Sigmoid colon (tissue), 7 donors: ENCODE measurements at regions of chr1 and their contacts with region 1.

Region 1: DNA sequence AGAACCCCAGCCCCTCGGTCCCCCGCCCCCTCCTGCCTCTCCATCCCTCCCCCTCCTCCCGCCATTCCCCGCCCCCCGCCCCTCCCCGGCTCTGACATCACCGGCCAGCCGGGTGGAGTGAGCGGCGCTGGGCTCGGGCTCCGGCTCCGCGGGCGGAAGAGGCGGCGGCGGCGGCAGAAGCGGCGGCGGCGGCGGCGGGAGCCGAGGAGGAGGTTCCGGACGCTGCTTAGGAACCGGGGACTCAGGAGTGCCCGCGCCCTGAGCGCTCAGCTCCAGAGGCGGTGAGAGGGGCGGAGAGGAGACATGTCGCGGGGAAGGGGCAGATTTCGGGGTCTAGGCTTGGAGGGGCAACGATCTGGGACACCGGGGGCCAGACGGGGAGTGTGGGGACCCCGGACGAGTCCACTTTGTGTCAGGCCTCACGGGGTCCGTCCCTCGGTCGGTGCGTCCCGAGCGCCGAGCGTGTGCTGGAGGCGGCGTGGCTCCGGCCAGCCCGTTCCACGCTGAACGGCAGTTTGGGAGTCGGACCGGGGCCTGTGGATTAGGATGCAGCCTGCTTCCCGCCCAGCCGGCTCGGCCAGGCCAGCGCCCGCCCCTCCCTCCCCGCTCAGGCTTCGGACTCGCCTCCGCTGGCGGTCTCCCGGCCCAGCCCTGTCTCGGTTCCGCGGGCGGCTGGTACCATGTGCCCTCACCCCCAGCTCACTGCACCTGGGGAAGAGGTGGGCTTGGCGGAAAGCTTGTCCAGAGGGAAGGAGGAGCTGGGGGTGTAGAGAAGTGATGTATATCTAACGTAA is at the start of gene PEA15:
- DNase-seq: peak; percentile 88
- H3K4me3 ChIP-seq: peak within 1 kb of the TSS; percentile 80 to 95 (median 90)
- H3K27ac ChIP-seq: peak within 1 kb of the TSS; percentile 93 to 99 (median 96)
- H3K4me1 ChIP-seq: peaks cover 0 to 58% (median 52%) of the 10 kb centered on the region in 4 donors
- H3K27me3 ChIP-seq: no peaks in the 10 kb centered on the region
- CTCF ChIP-seq: no peak
- EP300 ChIP-seq: no peak
- POLR2A ChIP-seq: peak in 1 of 2 donors; percentile 57
- total RNA-seq, gene PEA15: 65.7 to 126 (median 88.8) TPM

Region 2: DNA sequence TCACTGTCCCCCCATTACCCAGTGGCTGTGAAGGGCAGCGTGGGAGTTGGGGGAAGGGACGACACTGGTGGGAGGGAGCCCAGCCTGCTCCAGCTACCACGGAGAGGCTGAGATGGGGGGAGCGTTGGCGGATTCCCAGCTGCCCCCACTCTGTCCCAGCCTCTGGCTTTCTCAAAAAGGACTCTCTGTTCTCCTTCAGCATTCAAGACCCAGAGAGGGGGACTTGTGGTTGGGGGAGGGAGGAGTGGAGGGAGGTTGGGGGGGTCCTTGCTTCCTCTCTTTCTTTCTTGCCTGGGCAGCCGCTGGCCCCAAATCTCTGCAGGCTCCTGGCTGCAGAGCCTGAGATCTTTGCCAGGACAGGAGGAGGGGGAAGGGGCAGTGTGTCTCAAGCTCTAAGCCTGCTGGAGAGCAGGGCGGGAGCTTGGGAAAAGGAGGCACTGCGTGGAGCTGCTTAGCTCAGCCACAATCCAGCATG is 87.7 kb before region 1 on chr1:
- intact Hi-C with region 1: loop called (anchors 5 kb)
- DNase-seq: peak; percentile 89
- H3K4me3 ChIP-seq: peak overlapping the region; percentile 33 to 59 (median 54)
- H3K27ac ChIP-seq: peak overlapping the region; percentile 84 to 89 (median 86)
- H3K4me1 ChIP-seq: peaks cover 0 to 64% (median 47%) of the 10 kb centered on the region in 4 donors
- H3K27me3 ChIP-seq: no peaks in the 10 kb centered on the region
- CTCF ChIP-seq: no peak
- EP300 ChIP-seq: no peak
- POLR2A ChIP-seq: no peak

Region 3: DNA sequence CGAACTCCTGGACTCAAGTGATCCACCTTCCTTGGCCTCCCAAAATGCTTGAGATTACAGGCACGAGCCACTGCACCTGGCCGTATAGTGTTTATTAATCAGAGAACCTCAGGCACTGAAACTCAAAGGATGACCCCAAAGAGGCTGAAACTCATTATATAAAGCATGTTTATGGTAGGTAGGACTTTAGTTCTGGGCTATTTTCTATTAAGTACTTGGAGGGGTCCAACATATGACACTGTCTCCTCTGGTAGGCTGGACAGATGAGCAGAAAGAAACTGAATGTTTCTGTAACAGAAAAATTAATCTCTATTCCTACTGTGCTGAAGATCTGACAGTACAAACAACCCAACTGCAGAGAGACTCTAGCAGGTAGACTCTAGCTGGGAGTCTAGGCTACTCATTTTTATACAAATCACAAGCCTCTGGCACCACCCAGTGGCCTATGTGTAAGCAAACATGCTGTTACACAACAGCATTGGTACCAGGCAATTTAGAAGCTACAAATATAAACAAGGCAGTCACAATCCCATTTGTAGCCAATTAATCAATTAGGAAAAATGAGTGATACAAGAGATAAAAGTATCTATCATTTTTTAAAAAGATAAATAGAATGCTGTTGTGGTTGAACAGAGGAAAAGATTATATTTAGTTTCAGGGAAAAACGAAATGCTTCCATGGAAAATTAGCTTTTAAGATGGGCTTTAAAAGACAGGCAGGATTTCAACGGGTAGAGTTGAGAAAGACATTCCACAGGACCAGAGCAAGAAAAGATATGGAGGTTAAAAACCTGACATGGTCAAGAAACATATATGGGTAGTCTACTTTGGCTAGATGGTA is 46.5 kb after region 1 on chr1:
- intact Hi-C with region 1: loop called (anchors 5 kb)
- DNase-seq: peak; percentile 88
- H3K4me3 ChIP-seq: no peak overlapping the region
- H3K27ac ChIP-seq: peak overlapping the region; percentile 33 to 61 (median 47)
- H3K4me1 ChIP-seq: peaks cover 0 to 44% (median 34%) of the 10 kb centered on the region in 4 donors
- H3K27me3 ChIP-seq: no peaks in the 10 kb centered on the region
- CTCF ChIP-seq: peak; percentile 57 to 70 (median 62)
- EP300 ChIP-seq: no peak
- POLR2A ChIP-seq: no peak

Region 4: DNA sequence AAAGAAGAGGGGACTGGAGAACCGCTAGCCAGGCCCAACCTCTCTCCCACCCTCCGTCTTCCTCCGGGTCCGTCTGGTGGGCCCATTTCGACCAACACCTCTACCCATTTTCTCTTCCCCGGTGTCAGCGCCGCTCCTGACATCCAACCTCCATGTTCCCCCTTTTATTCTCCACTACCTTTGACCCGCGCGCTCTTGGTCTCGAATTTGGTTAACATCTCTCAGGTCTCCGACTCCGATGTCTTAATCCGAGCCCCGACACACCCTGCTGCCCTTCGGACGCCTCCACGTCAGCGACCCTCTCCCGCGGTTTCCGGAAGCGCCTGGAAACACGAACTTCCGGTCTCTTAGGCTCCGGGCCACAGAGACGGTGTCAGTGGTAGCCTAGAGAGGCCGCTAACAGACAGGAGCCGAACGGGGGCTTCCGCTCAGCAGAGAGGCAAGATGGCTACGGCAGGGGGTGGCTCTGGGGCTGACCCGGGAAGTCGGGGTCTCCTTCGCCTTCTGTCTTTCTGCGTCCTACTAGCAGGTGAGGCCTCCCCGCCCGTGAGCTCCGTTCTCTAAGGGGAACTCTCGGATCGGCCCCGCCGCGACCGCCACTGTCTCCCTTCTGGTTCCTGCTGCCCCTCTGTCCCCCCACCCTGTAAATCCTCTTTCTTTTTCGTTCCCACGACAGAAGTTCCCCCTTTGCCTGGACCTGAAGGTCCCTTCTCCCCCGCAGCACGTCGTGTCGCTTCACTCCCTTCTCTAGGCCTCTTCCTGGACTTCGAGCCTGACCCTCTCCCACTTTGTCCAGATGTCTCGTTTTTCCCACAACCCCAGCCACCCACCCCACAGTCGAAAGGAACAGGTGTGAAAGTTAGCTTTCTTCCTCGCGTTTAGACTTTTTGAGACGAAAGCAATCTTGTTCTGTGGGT is 137.8 kb after region 1 on chr1 and contains the starts of genes COPA and NCSTN:
- intact Hi-C with region 1: loop called (anchors 5 kb)
- DNase-seq: peak; percentile 96
- H3K4me3 ChIP-seq: peak within 1 kb of the TSS; percentile 68 to 84 (median 75)
- H3K27ac ChIP-seq: peak within 1 kb of the TSS; percentile 78 to 92 (median 89)
- H3K4me1 ChIP-seq: peaks cover 0 to 34% (median 21%) of the 10 kb centered on the region in 4 donors
- H3K27me3 ChIP-seq: no peaks in the 10 kb centered on the region
- CTCF ChIP-seq: no peak
- EP300 ChIP-seq: no peak
- POLR2A ChIP-seq: peak; percentile 84 to 93
- total RNA-seq, gene COPA: 93.8 to 117 (median 96.5) TPM
- total RNA-seq, gene NCSTN: 30.3 to 46.7 (median 39.0) TPM